Sigmoid colon (tissue), 7 donors: ENCODE measurements at regions of chr3 and their contacts with region 1.

Region 1: GRCh38 chr3:194141415-194142155 is 5.6 kb downstream of the HES1 start:
- DNase-seq: peak; percentile 96
- H3K4me3 ChIP-seq: peak overlapping the region; percentile 10 to 48 (median 42)
- H3K27ac ChIP-seq: peak overlapping the region; percentile 90 to 99 (median 96)
- H3K4me1 ChIP-seq: peaks cover 0 to 61% (median 53%) of the 10 kb centered on the region in 4 donors
- H3K27me3 ChIP-seq: no peaks in the 10 kb centered on the region
- CTCF ChIP-seq: no peak
- EP300 ChIP-seq: peak in 1 of 4 donors; percentile 64
- POLR2A ChIP-seq: no peak

Region 2: DNA sequence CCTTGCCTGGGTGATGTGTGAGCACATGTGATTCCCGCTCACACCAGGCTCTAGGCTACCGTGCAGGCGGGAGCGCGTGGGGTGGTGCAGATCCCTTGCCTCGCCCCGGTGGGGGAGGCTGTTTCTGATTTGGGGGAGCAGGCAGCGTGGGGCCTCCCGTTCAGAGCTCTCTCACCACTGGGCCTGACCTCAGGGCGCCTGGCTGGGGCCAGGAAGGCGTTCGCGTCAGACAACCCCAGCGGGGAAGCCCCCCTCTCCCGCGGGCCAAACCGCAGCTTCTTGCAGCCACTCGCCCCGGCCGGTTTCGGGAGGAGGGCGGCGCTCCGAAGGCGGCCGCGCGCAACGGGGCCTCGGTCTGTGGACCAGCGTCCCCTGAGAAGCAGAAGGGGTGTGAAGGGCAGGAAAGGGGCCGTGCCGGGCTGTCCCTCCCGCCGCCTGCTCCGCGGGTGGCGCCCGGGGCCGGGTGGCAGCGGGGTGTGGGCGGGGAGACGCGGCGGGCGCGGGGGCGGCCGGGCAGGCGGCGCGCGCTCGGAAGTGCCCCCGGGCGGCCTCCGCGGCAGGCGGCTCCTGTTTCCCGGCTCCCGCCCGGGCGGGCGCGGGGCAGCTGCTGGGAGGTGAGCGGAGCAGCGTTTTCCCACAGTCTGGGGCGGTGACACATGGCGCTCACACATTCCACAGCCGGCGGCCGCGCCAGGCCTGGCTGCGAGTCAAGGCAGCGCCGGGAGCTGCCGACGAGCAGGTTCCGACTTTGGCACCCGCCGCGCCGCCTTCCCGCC is 70.8 kb before region 1 on chr3:
- intact Hi-C with region 1: no loop called
- DNase-seq: peak; percentile 88
- H3K4me3 ChIP-seq: peak overlapping the region; percentile 37 to 64 (median 56)
- H3K27ac ChIP-seq: peak overlapping the region; percentile 80 to 85 (median 82)
- H3K4me1 ChIP-seq: peaks cover 0 to 18% (median 16%) of the 10 kb centered on the region in 4 donors
- H3K27me3 ChIP-seq: no peaks in the 10 kb centered on the region
- CTCF ChIP-seq: no peak
- EP300 ChIP-seq: no peak
- POLR2A ChIP-seq: no peak

Region 3: DNA sequence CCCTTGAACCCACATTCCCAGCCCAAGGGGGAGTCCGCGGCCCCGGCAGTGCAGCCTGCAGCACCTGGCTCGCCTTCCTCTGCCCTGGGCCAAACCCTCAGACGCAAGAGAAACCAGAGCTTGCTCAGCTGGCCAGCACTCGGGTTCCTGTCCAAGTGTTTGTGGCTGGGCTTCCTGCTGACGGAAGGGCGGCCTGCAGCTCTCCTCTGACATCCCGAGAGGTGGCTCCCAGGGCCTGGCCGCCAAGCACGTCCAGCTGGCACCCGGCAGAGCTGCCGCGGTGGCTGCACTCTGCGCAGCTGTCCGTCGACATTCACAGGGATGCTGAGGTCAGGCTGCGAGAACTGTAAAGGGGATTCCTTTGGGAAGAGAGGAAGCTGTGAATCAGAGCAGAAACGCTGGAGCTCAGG is 123.9 kb after region 1 on chr3:
- intact Hi-C with region 1: loop called (anchors 2 kb)
- DNase-seq: peak; percentile 98
- H3K4me3 ChIP-seq: peak overlapping the region in 1 of 4 donors; percentile 14
- H3K27ac ChIP-seq: peak overlapping the region; percentile 61 to 92 (median 80)
- H3K4me1 ChIP-seq: peaks cover 0 to 36% (median 34%) of the 10 kb centered on the region in 4 donors
- H3K27me3 ChIP-seq: no peaks in the 10 kb centered on the region
- CTCF ChIP-seq: no peak
- EP300 ChIP-seq: peak in 3 of 4 donors; percentile 61 to 71 (median 69)
- POLR2A ChIP-seq: no peak

Region 4: DNA sequence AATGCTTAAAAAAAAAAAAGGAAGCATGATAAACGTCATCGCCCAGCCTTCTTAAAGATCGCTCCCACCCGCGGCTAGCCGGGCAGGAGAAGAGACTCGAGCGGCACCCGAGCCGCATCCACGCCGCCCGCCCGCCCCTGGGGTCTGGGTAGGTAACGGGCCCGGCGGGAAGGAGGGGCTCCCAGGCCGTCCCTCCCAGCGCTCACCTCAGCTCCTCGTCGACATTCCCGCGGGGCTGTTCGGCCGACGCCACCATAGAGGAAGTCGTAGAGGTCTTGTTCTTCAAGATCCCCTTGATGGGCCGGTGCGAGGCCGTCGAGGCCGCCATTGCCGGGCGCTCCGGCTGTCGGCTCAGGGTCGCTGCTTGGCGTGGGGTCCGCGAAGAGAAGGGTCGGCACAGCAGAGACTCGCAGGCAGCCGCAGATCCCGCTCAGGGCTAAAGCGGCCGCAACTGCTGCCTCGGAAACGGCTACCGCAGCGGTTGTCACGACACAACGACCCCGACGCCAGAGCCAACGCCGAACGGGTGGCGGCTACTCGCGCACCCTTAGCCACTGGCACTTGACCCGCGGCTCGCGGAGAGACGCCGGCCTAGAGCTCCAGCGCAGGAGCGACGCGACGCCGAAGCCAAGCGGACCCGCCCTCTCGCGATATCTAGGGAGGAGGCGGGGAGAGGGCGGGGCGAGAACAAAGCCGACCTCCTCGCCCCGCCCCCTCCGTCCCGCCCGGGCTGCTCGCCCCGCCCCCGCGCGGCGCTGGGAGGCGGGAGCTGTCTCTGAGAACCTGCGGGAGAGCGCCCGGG is 1401.3 kb after region 1 on chr3 and contains the start of gene PPP1R2:
- intact Hi-C with region 1: no loop called
- DNase-seq: peak; percentile 96
- H3K4me3 ChIP-seq: peak within 1 kb of the TSS; percentile 68 to 98 (median 80)
- H3K27ac ChIP-seq: peak within 1 kb of the TSS; percentile 94 to 96 (median 95)
- H3K4me1 ChIP-seq: peaks cover 0 to 69% (median 56%) of the 10 kb centered on the region in 4 donors
- H3K27me3 ChIP-seq: no peaks in the 10 kb centered on the region
- CTCF ChIP-seq: no peak
- EP300 ChIP-seq: no peak
- POLR2A ChIP-seq: peak; percentile 92 to 94
- total RNA-seq, gene PPP1R2: 69.9 to 126 (median 88.0) TPM